Activated CD4-positive, alpha-beta T cell treated with anti-CD3 and anti-CD28 coated beads, Interleukin-2, amount 10 ng/mL, durations not matched to agents 7 days and 5 days (primary cell): ENCODE measurements at regions of chr1 and their contacts with region 1.

Region 1: GRCh38 chr1:27603681-27604578 is at the start of gene AHDC1:
- DNase-seq: peak; percentile 94
- H3K4me3 Mint-ChIP-seq: peak within 1 kb of the TSS; percentile 91
- H3K27ac Mint-ChIP-seq: peak within 1 kb of the TSS; percentile 85
- H3K4me1 Mint-ChIP-seq: peaks cover 43% of the 10 kb centered on the region
- H3K27me3 Mint-ChIP-seq: peaks cover 5% of the 10 kb centered on the region
- total RNA-seq, gene AHDC1: 15.3 to 19.3 TPM

Region 2: DNA sequence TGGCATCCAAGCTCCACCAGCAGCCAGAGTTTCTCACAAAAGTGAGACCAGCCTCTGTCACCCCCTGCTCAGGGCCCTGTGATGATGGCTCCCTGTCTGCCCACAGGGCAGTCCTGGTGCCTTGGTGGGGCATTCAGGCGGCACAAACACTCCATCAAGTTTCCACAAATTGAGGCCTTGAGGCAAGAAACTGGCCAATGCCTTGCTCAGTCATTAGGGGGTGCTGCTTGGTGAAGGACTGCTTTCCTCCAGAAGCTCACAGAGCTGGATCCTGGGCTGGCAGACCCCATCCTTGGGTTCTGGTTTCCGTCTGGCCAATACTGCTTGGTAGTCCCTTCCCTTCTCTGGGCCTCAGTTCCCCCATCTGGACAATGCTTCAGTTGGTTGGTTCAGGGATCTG is 12.5 kb after region 1 on chr1:
- CTCF ChIA-PET with region 1: interaction called, 18 read pairs
- POLR2A ChIA-PET with region 1: no interaction called
- DNase-seq: no peak
- H3K4me3 Mint-ChIP-seq: no peak overlapping the region
- H3K27ac Mint-ChIP-seq: no peak overlapping the region
- H3K4me1 Mint-ChIP-seq: peaks cover 51% of the 10 kb centered on the region
- H3K27me3 Mint-ChIP-seq: no peaks in the 10 kb centered on the region

Region 3: GRCh38 chr1:27662707-27663393 is 58.9 kb after region 1 on chr1:
- CTCF ChIA-PET with region 1: interaction called, 89 read pairs
- POLR2A ChIA-PET with region 1: interaction called, 7 read pairs
- DNase-seq: peak; percentile 93
- H3K4me3 Mint-ChIP-seq: peak overlapping the region; percentile 68
- H3K27ac Mint-ChIP-seq: peak overlapping the region; percentile 98
- H3K4me1 Mint-ChIP-seq: peaks cover 71% of the 10 kb centered on the region
- H3K27me3 Mint-ChIP-seq: no peaks in the 10 kb centered on the region

Region 4: GRCh38 chr1:27671964-27672749 is 68.2 kb after region 1 on chr1 and contains the start of gene IFI6:
- CTCF ChIA-PET with region 1: interaction called, 11 read pairs
- POLR2A ChIA-PET with region 1: interaction called, 6 read pairs
- DNase-seq: peak; percentile 92
- H3K4me3 Mint-ChIP-seq: peak within 1 kb of the TSS; percentile 98
- H3K27ac Mint-ChIP-seq: peak within 1 kb of the TSS; percentile 97
- H3K4me1 Mint-ChIP-seq: peaks cover 39% of the 10 kb centered on the region
- H3K27me3 Mint-ChIP-seq: no peaks in the 10 kb centered on the region
- total RNA-seq, gene IFI6: 231 to 321 TPM

Region 5: GRCh38 chr1:27952147-27952546 is 348.2 kb after region 1 on chr1:
- CTCF ChIA-PET with region 1: no interaction called
- POLR2A ChIA-PET with region 1: no interaction called
- DNase-seq: no peak
- H3K4me3 Mint-ChIP-seq: no peak overlapping the region
- H3K27ac Mint-ChIP-seq: no peak overlapping the region
- H3K4me1 Mint-ChIP-seq: no peaks in the 10 kb centered on the region
- H3K27me3 Mint-ChIP-seq: no peaks in the 10 kb centered on the region